ENCODE measurements at regions of chr3 and their contacts with region 1.

Region 1: DNA sequence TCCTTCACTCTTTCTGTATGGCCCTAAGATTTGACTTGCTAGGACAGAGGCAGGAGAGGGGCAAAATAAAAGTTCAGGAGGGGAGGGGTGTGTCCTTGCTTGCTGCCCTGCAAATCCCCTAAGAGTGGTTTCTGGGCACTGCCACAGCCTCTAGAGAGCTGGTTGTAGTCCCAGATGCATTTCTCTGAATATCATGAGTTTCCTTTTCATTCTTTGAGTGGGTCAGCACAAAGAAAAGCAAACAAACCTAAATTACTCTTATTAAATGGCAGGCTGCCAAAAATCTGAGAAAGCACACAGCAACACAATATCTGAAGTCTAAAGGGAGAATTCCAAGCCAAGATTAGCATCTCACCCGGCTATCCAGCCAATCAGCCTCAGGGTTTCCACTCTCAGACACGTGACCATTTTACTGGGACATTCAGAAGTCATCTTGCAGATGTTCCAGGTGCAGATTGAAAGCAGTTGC is 919.3 kb downstream of the TUSC7 start:
- DNase-seq: no peak
- ATAC-seq: no peak
- H3K4me3 Mint-ChIP-seq: no peak overlapping the region
- H3K27ac Mint-ChIP-seq: no peak overlapping the region
- H3K4me1 Mint-ChIP-seq: no peaks in the 10 kb centered on the region
- H3K27me3 Mint-ChIP-seq: no peaks in the 10 kb centered on the region

Region 2: GRCh38 chr3:116863822-116864589 is 764.9 kb before region 1 on chr3:
- CTCF ChIA-PET with region 1: no interaction called
- POLR2A ChIA-PET with region 1: no interaction called
- intact Hi-C with region 1: loop called in 1 of 2 experiments (anchors 10 kb)
- DNase-seq: no peak
- ATAC-seq: no peak
- H3K4me3 Mint-ChIP-seq: no peak overlapping the region
- H3K27ac Mint-ChIP-seq: no peak overlapping the region
- H3K4me1 Mint-ChIP-seq: no peaks in the 10 kb centered on the region
- H3K27me3 Mint-ChIP-seq: no peaks in the 10 kb centered on the region

Region 3: GRCh38 chr3:117939425-117940027 is 310.7 kb after region 1 on chr3:
- CTCF ChIA-PET with region 1: no interaction called
- POLR2A ChIA-PET with region 1: no interaction called
- intact Hi-C with region 1: no loop called
- DNase-seq: no peak
- ATAC-seq: no peak
- H3K4me3 Mint-ChIP-seq: no peak overlapping the region
- H3K27ac Mint-ChIP-seq: no peak overlapping the region
- H3K4me1 Mint-ChIP-seq: no peaks in the 10 kb centered on the region
- H3K27me3 Mint-ChIP-seq: no peaks in the 10 kb centered on the region